HepG2 (cell line): ENCODE measurements at regions of chr3 and their contacts with region 1.

Region 1: DNA sequence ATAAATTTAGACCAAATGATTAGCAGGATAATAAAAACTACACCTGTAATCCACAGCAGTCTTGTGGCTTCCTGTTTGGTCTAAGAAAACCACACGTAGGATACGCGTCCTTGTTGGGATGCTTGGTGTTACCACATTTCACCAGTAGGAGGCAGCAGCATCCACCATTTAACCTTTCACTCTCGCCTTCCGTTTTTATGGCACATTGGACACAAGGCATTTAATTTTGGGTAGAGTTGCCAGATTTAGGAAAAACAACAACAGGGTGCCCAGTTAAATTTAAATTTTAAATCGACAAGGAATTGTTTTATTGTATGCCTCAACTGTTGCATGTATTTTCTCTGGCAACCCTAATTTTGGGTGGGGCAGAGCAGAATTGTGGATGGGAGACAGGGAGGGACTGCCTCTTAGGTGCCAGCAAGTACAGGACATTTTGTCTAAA is 6.3 kb downstream of the LRRC31 start:
- DNase-seq: peak; percentile 55
- ATAC-seq: peak; percentile 82
- H3K4me3 ChIP-seq: no peak overlapping the region
- H3K27ac ChIP-seq: no peak overlapping the region
- H3K4me1 ChIP-seq: no peaks in the 10 kb centered on the region
- H3K27me3 ChIP-seq: no peaks in the 10 kb centered on the region
- CTCF ChIP-seq: peak; percentile 89
- EP300 ChIP-seq: no peak
- POLR2A ChIP-seq: no peak
- RAD21 ChIP-seq: peak; percentile 64

Region 2: DNA sequence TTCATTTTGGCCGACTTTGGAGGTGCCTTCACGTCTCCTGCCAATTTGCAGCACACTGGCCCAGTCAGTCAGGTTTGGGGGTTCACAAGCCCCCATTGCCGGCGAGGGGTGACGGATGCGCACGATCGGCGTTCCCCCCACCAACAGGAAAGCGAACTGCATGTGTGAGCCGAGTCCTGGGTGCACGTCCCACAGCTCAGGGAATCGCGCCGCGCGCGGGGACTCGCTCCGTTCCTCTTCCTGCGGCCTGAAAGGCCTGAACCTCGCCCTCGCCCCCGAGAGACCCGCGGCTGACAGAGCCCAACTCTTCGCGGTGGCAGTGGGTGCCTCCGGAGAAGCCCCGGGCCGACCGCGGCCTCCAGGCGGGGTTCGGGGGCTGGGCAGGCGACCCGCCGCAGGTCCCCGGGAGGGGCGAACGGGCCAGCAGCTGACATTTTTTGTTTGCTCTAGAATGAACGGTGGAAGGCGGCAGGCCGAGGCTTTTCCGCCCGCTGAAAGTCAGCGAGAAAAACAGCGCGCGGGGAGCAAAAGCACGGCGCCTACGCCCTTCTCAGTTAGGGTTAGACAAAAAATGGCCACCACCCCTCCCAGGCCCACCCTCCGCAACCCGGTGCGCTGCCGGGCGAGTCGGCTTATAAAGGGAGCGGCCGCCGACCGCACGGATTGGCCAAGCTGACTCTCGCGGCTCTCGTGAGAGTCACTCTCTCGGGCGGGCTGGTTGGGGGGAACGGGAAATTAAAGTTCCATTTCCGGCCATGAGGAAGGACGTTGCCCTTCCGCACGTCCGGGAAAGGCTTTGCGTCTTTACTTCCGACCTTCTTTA is 98.8 kb before region 1 on chr3 and contains the start of gene TERC:
- CTCF ChIA-PET with region 1: no interaction called
- POLR2A ChIA-PET with region 1: no interaction called
- in situ Hi-C with region 1: no loop called
- intact Hi-C with region 1: loop called (anchors 5 kb)
- DNase-seq: peak; percentile 79
- ATAC-seq: peak; percentile 85
- H3K4me3 ChIP-seq: peak within 1 kb of the TSS; percentile 62 to 80 (median 72)
- H3K27ac ChIP-seq: peak within 1 kb of the TSS; percentile 79
- H3K4me1 ChIP-seq: no peaks in the 10 kb centered on the region; the same call in 1 of the 2 replicates
- H3K27me3 ChIP-seq: 0 out of 5 replicates have a peak, but pooled peaks cover 0 to 4% of the 10 kb centered on the region in 2 experiments
- CTCF ChIP-seq: no peak
- EP300 ChIP-seq: no peak
- POLR2A ChIP-seq: peak; percentile 82 to 96
- RAD21 ChIP-seq: no peak
- total RNA-seq, gene TERC: 8.4 and 74.6 TPM in 2 replicates

Region 3: DNA sequence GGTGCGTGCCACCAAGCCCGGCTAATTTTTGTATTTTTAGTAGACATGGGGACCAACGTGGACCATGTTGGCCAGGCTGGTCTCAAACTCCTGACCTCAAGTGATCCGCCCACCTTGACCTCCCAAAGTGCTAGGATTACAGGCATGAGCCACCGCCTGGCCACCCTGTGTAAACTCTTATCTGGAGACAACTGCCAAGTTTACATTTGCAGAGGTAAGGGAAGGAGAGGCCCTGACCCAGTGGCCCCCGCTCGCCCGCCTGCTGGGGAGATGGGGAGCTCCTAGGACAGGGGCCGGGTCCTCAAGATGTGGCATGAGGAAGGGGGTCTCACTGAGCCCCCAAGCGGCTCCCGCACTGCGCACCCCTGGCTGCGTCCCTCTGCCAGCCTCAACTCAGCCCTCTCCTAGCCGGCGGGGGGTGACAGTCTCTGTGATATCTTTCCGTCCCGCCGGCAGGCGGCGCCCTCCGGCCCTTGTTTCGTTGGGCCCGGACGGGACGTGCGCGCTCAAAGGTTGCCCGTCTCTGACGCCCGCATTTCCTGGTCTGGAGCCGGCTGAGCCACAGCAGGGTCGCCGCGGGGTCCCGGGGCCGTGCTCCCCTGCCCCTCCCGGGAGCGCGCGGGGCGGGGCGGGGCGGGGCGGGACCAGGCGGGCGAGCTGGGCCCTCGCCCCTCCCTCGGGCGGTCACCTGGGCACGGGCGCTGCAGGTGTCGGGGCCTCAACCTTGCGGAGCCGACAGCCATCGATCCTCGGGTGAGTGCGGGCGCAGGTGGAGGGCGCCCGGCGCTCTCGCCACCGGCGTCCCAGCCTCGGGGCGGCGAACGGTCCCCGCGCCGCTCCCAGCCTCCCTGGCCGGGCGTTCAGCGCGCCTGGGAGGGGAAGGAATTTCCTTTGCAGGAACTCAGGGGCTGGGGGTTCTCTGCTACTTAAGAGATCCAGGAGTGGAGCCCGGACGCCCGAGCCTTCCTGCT is 174.3 kb after region 1 on chr3 and contains the start of gene GPR160:
- CTCF ChIA-PET with region 1: interaction called, 7 read pairs
- POLR2A ChIA-PET with region 1: no interaction called
- in situ Hi-C with region 1: loop called (anchors 10 kb)
- intact Hi-C with region 1: loop called (anchors 5 kb)
- DNase-seq: peak; percentile 68
- ATAC-seq: peak; percentile 91
- H3K4me3 ChIP-seq: peak within 1 kb of the TSS; percentile 53 to 85 (median 80)
- H3K27ac ChIP-seq: peak within 1 kb of the TSS; percentile 34
- H3K4me1 ChIP-seq: no peaks in the 10 kb centered on the region
- H3K27me3 ChIP-seq: no peaks in the 10 kb centered on the region; a peak in 1 of 5 replicates
- CTCF ChIP-seq: peak; percentile 91
- EP300 ChIP-seq: peak in 1 of 2 experiments; percentile 43; a peak in 1 of 4 replicates
- POLR2A ChIP-seq: no peak; a peak in 1 of 4 replicates
- RAD21 ChIP-seq: peak; percentile 90
- total RNA-seq, gene GPR160: 12.1 and 14.0 TPM in 2 replicates

Region 4: GRCh38 chr3:170054204-170054603 is 190.7 kb after region 1 on chr3:
- CTCF ChIA-PET with region 1: interaction called, 6 read pairs
- POLR2A ChIA-PET with region 1: no interaction called
- in situ Hi-C with region 1: no loop called
- intact Hi-C with region 1: loop called (anchors 1 kb)
- DNase-seq: no peak
- ATAC-seq: peak; percentile 68
- H3K4me3 ChIP-seq: no peak overlapping the region
- H3K27ac ChIP-seq: no peak overlapping the region
- H3K4me1 ChIP-seq: no peaks in the 10 kb centered on the region
- H3K27me3 ChIP-seq: no peaks in the 10 kb centered on the region
- CTCF ChIP-seq: peak; percentile 36
- EP300 ChIP-seq: no peak
- POLR2A ChIP-seq: no peak
- RAD21 ChIP-seq: peak; percentile 18; the same call in 1 of the 2 replicates